ENCODE measurements at regions of chr19 and their contacts with region 1.

Region 1: DNA sequence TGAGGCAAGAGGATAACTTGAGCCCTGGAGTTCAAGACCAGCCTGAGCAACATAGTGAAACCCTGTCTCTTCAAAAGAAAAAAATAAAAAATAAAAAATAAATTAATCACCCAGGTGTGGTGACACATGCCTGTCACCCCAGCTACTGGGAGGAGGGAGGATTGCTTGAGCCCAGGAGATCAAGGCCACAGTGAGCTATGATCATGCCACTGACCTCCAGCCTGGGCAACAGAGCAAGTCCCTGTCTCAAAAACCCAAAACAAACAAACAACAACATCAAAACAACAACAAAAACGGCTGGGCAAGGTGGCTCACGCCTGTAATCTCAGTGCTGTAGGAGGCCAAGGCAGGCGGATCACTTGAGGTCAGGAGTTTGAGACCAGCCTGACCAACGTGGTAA is 4.3 kb upstream of the SLC39A3 start:
- DNase-seq: no peak
- ATAC-seq: no peak
- H3K4me3 ChIP-seq: no peak overlapping the region
- H3K4me3 Mint-ChIP-seq: no peak overlapping the region
- H3K27ac ChIP-seq: no peak overlapping the region
- H3K27ac Mint-ChIP-seq: no peak overlapping the region
- H3K4me1 ChIP-seq: peaks cover 0 to 14% of the 10 kb centered on the region in 2 experiments
- H3K4me1 Mint-ChIP-seq: peaks cover 4 to 9% (median 7%) of the 10 kb centered on the region in 3 donors
- H3K27me3 ChIP-seq: peaks cover 0 to 21% of the 10 kb centered on the region in 2 experiments
- H3K27me3 Mint-ChIP-seq: peaks cover 17 to 18% of the 10 kb centered on the region in 2 donors

Region 2: DNA sequence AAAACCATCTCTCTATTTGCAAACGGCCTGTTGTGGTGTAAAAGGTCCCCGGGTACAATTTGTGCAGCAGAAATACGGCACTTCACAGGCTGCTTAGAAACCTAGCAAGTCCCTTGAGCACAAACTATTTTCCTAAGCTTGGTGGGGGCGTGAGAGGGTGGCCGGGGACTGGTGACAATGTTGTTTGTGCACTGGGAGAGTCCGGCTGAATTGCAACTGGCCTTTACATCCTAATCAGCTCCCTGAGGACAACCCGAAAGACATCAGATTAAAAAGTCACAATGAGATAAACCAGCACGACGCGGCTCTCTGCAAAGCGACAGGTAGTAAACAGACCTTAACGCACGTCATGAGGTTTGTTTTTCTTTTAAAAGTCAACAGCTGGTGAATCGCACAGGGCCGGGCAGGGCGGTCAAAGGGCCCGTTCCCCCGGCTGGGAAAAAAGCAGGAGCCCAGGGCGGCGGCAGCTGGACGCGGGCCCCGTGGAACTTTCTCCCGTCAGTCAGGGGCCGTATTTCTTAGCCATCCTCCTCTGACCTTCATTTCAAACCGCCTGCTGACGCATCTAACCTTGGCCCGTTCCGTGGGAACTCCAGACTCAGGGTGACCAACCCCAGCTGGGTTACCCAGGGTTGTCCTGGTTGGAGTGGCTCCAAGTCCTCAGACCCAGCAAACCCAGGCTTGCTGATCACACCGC is 155.9 kb before region 1 on chr19:
- CTCF ChIA-PET with region 1: no interaction called
- POLR2A ChIA-PET with region 1: no interaction called
- DNase-seq: no peak
- ATAC-seq: no peak
- H3K4me3 ChIP-seq: no peak overlapping the region
- H3K4me3 Mint-ChIP-seq: no peak overlapping the region
- H3K27ac ChIP-seq: no peak overlapping the region
- H3K27ac Mint-ChIP-seq: no peak overlapping the region
- H3K4me1 ChIP-seq: no peaks in the 10 kb centered on the region
- H3K4me1 Mint-ChIP-seq: no peaks in the 10 kb centered on the region
- H3K27me3 ChIP-seq: peaks cover 0 to 8% of the 10 kb centered on the region in 2 experiments
- H3K27me3 Mint-ChIP-seq: no peaks in the 10 kb centered on the region

Region 3: DNA sequence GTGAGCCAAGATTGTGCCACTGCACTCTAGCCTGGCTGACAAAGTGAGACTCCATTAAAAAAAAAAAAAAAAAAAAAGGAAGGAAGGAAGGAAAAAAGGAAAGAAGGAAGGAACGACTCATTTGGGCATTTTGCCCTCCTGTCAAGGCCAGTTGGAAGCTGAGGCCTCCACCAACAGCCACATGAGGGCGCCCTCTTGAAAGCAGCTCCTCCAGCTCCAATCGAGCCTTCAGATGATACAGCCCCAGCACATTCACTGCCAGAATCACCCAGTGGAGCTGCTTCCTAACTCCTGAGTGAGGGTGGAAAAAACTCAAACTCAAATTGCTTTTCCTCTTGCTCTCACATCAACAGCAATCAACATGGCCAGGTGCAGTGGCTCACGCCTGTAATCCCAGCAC is 82.5 kb before region 1 on chr19:
- CTCF ChIA-PET with region 1: no interaction called
- POLR2A ChIA-PET with region 1: no interaction called
- DNase-seq: no peak
- ATAC-seq: no peak
- H3K4me3 ChIP-seq: no peak overlapping the region
- H3K4me3 Mint-ChIP-seq: no peak overlapping the region
- H3K27ac ChIP-seq: no peak overlapping the region
- H3K27ac Mint-ChIP-seq: no peak overlapping the region
- H3K4me1 ChIP-seq: no peaks in the 10 kb centered on the region
- H3K4me1 Mint-ChIP-seq: no peaks in the 10 kb centered on the region
- H3K27me3 ChIP-seq: peaks cover 0 to 7% of the 10 kb centered on the region in 2 experiments
- H3K27me3 Mint-ChIP-seq: no peaks in the 10 kb centered on the region

Region 4: DNA sequence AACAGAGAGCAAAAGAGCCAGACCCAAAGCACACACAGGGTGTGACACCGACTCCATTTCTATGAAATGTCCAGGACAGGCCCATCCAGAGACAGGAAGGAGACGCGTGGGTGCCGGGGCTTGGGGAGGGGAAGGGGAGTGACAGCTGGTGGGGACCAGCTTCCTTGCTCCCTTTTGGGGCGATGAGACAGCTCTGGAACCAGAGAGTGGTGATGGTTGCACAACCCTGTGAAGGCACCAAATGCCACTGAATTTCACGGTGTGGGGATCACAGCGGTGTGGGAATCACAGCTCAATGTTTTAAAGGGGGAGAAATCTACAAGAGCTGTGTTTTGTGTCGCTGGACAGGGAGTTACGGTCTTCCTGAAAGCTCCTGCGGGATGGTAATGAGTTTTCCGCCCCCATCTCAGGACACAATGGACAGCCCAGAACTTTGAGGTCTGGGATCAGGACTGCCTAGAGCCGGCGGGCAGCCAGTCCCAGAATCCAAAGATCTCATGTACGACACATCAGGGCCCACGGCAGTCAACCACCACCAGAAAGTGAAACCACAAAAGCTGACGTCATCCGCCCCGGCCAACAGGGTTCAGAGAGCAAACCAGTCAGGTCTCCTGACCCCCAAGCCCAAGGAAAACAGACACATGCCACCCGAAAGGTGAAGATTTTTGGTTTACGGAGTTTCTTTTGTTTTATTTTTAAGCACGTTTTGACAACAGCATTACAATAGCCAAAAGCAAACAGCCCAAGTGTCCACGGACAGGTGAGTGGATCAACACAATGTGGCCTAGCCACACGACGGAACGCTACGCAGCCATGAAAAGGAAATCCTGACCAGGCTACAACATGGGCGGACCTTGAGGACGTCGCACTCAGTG is 31.7 kb after region 1 on chr19:
- CTCF ChIA-PET with region 1: no interaction called
- POLR2A ChIA-PET with region 1: interaction called in 1 of 2 experiments, 15 read pairs
- DNase-seq: peak; percentile 11 to 79 (median 56)
- ATAC-seq: peak; percentile 59 to 83 (median 76)
- H3K4me3 ChIP-seq: peak overlapping the region; percentile 25 to 40
- H3K4me3 Mint-ChIP-seq: peak overlapping the region; percentile 79 to 86 (median 81)
- H3K27ac ChIP-seq: peak overlapping the region; percentile 80
- H3K27ac Mint-ChIP-seq: peak overlapping the region; percentile 96 to 97
- H3K4me1 ChIP-seq: peaks cover 6 to 32% of the 10 kb centered on the region in 2 experiments
- H3K4me1 Mint-ChIP-seq: peaks cover 48 to 51% (median 50%) of the 10 kb centered on the region in 3 donors
- H3K27me3 ChIP-seq: no peaks in the 10 kb centered on the region
- H3K27me3 Mint-ChIP-seq: no peaks in the 10 kb centered on the region

Measured in T-cell (primary cell).